Activated naive CD8-positive, alpha-beta T cell treated with anti-CD3 and anti-CD28 coated beads, Interleukin-2, amount 10 ng/mL, durations not matched to agents 7 days and 5 days (primary cell): ENCODE measurements at regions of chr12 and their contacts with region 1.

Region 1: DNA sequence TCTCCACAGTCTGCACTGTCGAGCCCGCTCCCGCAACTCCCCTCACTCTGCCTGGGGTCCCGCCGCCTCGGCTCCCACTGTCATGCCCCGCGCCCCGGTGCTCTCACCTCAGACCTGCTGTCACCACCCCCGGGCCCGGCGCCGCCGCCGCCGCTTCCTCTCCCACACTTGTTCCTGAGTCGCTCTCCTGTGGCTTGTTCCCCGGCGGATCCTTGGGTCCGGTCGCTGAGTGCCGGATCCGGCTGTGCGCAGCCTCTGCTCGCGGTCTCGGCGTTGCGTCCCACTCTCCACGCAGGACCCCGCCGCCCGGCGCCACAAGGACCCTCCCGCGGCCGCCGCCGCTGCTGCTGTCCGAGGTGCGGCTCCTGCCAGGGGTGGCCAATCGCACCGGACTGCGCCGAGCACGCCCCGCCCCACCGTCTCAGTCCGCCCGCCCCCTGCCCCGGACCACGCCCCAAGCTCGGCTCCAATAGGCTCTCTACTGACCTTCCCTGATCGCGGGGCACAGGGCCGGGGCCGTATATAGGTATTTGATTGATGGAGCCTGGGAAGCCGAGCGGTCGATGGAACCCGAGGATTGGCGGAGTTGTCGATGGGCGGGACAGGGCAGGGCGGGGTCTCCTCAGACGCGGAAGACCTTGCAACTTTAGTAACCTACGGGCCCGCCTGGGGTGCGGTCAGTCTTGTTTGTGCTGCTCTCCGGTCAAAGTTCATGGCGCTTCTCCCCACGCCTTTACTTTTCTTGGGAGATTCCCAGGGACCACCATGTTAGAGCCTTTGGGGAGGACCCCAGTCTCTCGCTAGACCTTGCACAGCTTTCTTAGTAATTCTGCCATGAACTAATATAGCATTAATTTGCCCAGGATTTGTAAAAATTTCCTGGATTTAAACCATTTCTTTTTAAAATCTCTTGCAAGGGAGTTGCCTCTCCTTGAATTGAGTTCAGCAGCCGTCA is at the start of gene TAOK3:
- DNase-seq: peak; percentile 94
- ATAC-seq: peak; percentile 84
- H3K4me3 Mint-ChIP-seq: peak within 1 kb of the TSS; percentile 96
- H3K27ac Mint-ChIP-seq: peak within 1 kb of the TSS; percentile 91
- H3K4me1 Mint-ChIP-seq: peaks cover 32% of the 10 kb centered on the region
- H3K27me3 Mint-ChIP-seq: peaks cover 13% of the 10 kb centered on the region
- total RNA-seq, gene TAOK3: 60.2 to 63.4 TPM

Region 2: GRCh38 chr12:118346895-118347294 is 25.9 kb before region 1 on chr12:
- POLR2A ChIA-PET with region 1: no interaction called
- DNase-seq: no peak
- ATAC-seq: no peak
- H3K4me3 Mint-ChIP-seq: no peak overlapping the region
- H3K27ac Mint-ChIP-seq: no peak overlapping the region
- H3K4me1 Mint-ChIP-seq: peaks cover 2% of the 10 kb centered on the region
- H3K27me3 Mint-ChIP-seq: no peaks in the 10 kb centered on the region

Region 3: DNA sequence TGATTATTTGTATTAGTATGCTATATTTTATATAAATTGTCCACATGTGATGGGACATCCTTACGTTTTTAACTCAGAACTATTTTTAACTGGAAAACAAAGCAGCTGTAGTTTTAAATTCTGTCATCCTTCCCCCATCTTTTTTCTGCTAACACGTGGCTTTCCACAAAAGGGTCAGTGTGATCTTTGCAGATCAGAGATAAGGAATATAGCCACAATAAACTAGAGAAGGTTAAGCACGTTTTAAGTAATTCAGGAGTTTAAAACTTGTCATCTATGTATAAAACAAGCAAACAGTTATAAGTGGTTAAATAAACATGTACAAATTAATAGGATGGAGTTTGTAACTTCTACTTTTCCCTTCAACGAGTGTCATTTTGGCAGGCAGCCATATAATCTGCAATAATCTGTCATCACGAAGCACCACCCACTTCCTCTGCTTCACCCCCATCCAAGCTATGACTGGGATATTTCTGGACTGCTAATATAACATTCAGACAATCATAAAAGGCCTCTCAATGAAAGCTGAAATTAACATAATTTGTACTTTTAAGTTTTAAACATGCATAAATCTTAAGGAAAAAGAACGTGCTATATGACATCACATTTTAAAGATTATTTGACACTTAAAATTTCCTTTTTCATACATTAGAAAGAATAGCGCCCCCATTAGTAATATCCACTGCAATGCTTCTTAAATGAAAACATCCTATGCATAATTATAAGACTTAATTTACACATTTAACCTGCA is 15.4 kb before region 1 on chr12:
- POLR2A ChIA-PET with region 1: interaction called, 30 read pairs
- DNase-seq: no peak
- ATAC-seq: peak; percentile 80
- H3K4me3 Mint-ChIP-seq: peak overlapping the region; percentile 97
- H3K27ac Mint-ChIP-seq: peak overlapping the region; percentile 85
- H3K4me1 Mint-ChIP-seq: peaks cover 29% of the 10 kb centered on the region
- H3K27me3 Mint-ChIP-seq: no peaks in the 10 kb centered on the region